Esophagus muscularis mucosa (tissue), 4 donors: ENCODE measurements at regions of chr3 and their contacts with region 1.

Region 1: GRCh38 chr3:93924491-93924890 is 49.2 kb downstream of the PROS1 start:
- DNase-seq: no peak
- H3K4me3 ChIP-seq: no peak overlapping the region
- H3K27ac ChIP-seq: no peak overlapping the region
- H3K4me1 ChIP-seq: no peaks in the 10 kb centered on the region
- H3K27me3 ChIP-seq: no peaks in the 10 kb centered on the region
- CTCF ChIP-seq: no peak
- EP300 ChIP-seq: no peak
- POLR2A ChIP-seq: no peak

Region 2: GRCh38 chr3:93867425-93867824 is 57.1 kb before region 1 on chr3:
- intact Hi-C with region 1: loop called (anchors 10 kb)
- DNase-seq: no peak
- H3K4me3 ChIP-seq: no peak overlapping the region
- H3K27ac ChIP-seq: no peak overlapping the region
- H3K4me1 ChIP-seq: no peaks in the 10 kb centered on the region
- H3K27me3 ChIP-seq: no peaks in the 10 kb centered on the region
- CTCF ChIP-seq: no peak
- EP300 ChIP-seq: no peak
- POLR2A ChIP-seq: no peak

Region 3: DNA sequence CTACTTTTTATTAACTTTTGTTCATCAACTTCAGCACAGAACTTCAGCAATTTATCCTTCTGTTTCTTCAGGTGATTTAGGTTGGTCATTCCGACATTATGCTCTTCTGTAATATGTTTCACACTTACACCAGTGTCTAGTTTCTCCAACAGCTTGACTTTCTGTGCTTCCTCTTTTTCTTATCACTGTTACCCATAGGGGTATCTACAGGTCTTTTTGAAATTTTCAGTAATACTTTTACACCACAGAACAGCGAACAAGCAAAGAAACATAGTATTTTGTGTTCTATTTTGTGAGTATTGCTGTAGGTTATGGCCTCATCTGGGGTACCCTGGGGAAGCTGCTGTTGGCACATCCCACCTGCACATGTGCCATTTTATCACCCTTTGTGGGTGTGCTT is 399.1 kb after region 1 on chr3:
- intact Hi-C with region 1: no loop called
- DNase-seq: no peak
- H3K4me3 ChIP-seq: no peak overlapping the region
- H3K27ac ChIP-seq: no peak overlapping the region
- H3K4me1 ChIP-seq: no peaks in the 10 kb centered on the region
- H3K27me3 ChIP-seq: no peaks in the 10 kb centered on the region
- CTCF ChIP-seq: no peak
- EP300 ChIP-seq: no peak
- POLR2A ChIP-seq: no peak

Region 4: DNA sequence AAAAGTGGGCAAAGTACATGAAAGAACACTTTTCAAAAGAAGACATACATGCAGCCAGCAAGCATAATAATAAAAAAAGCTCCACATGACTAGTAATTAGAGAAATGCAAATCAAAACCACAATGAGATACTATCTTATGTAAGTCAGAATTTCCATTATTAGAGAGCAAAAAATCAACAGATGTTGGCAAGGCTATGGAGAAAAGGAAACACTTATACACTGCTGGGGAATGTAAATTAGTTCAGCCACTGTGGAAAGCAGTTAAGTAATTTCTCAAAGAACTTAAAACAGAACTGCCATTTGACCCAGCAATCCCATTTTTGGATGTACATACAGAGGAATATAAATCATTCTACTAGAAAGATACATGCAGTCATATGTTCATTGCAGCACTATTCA is 499.1 kb after region 1 on chr3:
- intact Hi-C with region 1: no loop called
- DNase-seq: no peak
- H3K4me3 ChIP-seq: no peak overlapping the region
- H3K27ac ChIP-seq: no peak overlapping the region
- H3K4me1 ChIP-seq: no peaks in the 10 kb centered on the region
- H3K27me3 ChIP-seq: no peaks in the 10 kb centered on the region
- CTCF ChIP-seq: no peak
- EP300 ChIP-seq: no peak
- POLR2A ChIP-seq: no peak